ENCODE measurements at regions of chr5 and their contacts with region 1.

Region 1: DNA sequence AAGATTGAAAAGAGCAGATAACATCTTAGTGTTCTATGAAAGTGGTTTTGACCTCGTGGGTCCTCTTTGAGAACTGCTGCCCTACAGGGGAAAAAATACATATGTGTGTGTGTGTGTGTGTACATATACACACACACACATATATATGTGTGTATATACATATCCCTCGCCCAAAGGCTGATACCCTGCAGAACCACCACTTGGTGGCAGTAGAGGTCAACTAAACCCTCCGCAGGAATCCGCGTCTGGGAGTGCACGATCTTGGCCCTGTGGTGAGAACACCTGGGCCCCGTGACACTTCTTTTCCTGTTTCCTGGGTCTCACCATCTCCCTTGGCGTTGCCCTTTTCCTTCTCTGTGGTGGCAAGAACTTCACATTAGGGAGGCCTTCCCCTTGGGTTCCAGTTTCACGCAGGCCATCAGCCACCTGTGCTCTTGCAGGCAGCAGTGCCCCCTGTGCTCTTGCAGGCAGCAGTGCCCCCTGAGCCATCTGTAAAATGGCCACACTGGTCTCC is 8.2 kb downstream of the IL9 start:
- DNase-seq: peak; percentile 25 to 76 (median 58)
- ATAC-seq: peak; percentile 88
- H3K4me3 ChIP-seq: peak overlapping the region in 1 of 2 experiments; percentile 8
- H3K4me3 Mint-ChIP-seq: peak overlapping the region; percentile 35
- H3K27ac ChIP-seq: no peak overlapping the region
- H3K27ac Mint-ChIP-seq: no peak overlapping the region
- H3K4me1 ChIP-seq: no peaks in the 10 kb centered on the region
- H3K4me1 Mint-ChIP-seq: peaks cover 14% of the 10 kb centered on the region
- H3K27me3 ChIP-seq: no peaks in the 10 kb centered on the region
- H3K27me3 Mint-ChIP-seq: peaks cover 17% of the 10 kb centered on the region
- CTCF ChIP-seq: peak; percentile 81

Region 2: GRCh38 chr5:135847976-135848375 is 39.4 kb before region 1 on chr5:
- CTCF ChIA-PET with region 1: no interaction called
- POLR2A ChIA-PET with region 1: no interaction called
- intact Hi-C with region 1: no loop called
- DNase-seq: no peak
- ATAC-seq: no peak
- H3K4me3 ChIP-seq: no peak overlapping the region
- H3K4me3 Mint-ChIP-seq: no peak overlapping the region
- H3K27ac ChIP-seq: no peak overlapping the region
- H3K27ac Mint-ChIP-seq: no peak overlapping the region
- H3K4me1 ChIP-seq: no peaks in the 10 kb centered on the region
- H3K4me1 Mint-ChIP-seq: no peaks in the 10 kb centered on the region
- H3K27me3 ChIP-seq: no peaks in the 10 kb centered on the region
- H3K27me3 Mint-ChIP-seq: no peaks in the 10 kb centered on the region
- CTCF ChIP-seq: no peak

Region 3: GRCh38 chr5:136062366-136063274 is 175.2 kb after region 1 on chr5:
- CTCF ChIA-PET with region 1: no interaction called
- POLR2A ChIA-PET with region 1: no interaction called
- intact Hi-C with region 1: loop called in 1 of 2 experiments (anchors 2 kb)
- DNase-seq: peak in 2 of 9 experiments; percentile 51 to 57
- ATAC-seq: peak; percentile 55
- H3K4me3 ChIP-seq: no peak overlapping the region
- H3K4me3 Mint-ChIP-seq: no peak overlapping the region
- H3K27ac ChIP-seq: no peak overlapping the region
- H3K27ac Mint-ChIP-seq: no peak overlapping the region
- H3K4me1 ChIP-seq: no peaks in the 10 kb centered on the region
- H3K4me1 Mint-ChIP-seq: no peaks in the 10 kb centered on the region
- H3K27me3 ChIP-seq: no peaks in the 10 kb centered on the region
- H3K27me3 Mint-ChIP-seq: peaks cover 7% of the 10 kb centered on the region
- CTCF ChIP-seq: peak; percentile 14

Region 4: DNA sequence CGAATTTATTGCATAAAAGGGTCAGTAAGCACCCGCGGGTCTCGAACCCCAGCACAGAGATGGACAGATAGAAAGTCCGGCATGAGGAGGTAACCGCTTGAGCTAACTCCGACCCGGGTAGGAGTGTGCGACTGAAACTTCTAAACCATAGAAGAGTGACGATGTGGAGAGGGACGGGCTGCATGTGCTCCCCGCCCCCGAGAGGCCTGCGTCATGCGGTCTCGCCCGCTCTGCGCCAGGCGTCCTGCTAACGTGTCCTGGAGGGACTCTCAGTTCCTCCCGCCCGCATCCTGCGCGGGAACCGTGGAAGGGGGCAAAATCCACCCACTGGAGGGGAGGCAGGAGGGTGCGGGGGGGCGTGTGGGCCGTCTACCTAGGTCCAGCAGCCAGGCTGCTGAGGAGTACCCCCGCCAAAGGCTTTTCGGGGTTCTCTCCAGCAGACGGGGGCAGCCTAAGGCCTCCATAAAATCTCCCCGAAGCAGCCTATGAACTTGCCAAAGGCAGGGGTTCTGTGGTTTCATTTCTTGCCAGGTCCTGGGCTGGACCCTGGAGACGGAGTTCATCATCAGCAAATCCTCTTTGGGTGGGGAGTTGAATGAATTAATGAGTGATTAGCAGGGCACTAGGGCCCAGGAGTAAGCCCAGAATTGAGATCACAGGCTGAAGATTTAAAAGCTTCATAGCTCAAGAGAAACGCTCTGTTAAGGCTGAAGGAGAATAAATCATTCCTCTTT is 193.2 kb after region 1 on chr5:
- CTCF ChIA-PET with region 1: interaction called, 8 read pairs
- POLR2A ChIA-PET with region 1: no interaction called
- intact Hi-C with region 1: loop called in 1 of 2 experiments (anchors 1 kb)
- DNase-seq: peak; percentile 10 to 75 (median 44)
- ATAC-seq: peak; percentile 96
- H3K4me3 ChIP-seq: peak overlapping the region; percentile 19 to 39
- H3K4me3 Mint-ChIP-seq: peak overlapping the region; percentile 77
- H3K27ac ChIP-seq: no peak overlapping the region
- H3K27ac Mint-ChIP-seq: peak overlapping the region; percentile 13
- H3K4me1 ChIP-seq: peaks cover 2% of the 10 kb centered on the region
- H3K4me1 Mint-ChIP-seq: peaks cover 4% of the 10 kb centered on the region
- H3K27me3 ChIP-seq: no peaks in the 10 kb centered on the region
- H3K27me3 Mint-ChIP-seq: peaks cover 30% of the 10 kb centered on the region
- CTCF ChIP-seq: no peak

Region 5: GRCh38 chr5:136174021-136174659 is 286.7 kb after region 1 on chr5:
- CTCF ChIA-PET with region 1: no interaction called
- POLR2A ChIA-PET with region 1: no interaction called
- intact Hi-C with region 1: loop called in 1 of 2 experiments (anchors 5 kb)
- DNase-seq: peak in 2 of 9 experiments; percentile 12 to 26
- ATAC-seq: no peak
- H3K4me3 ChIP-seq: no peak overlapping the region
- H3K4me3 Mint-ChIP-seq: no peak overlapping the region
- H3K27ac ChIP-seq: no peak overlapping the region
- H3K27ac Mint-ChIP-seq: no peak overlapping the region
- H3K4me1 ChIP-seq: no peaks in the 10 kb centered on the region
- H3K4me1 Mint-ChIP-seq: no peaks in the 10 kb centered on the region
- H3K27me3 ChIP-seq: no peaks in the 10 kb centered on the region
- H3K27me3 Mint-ChIP-seq: no peaks in the 10 kb centered on the region
- CTCF ChIP-seq: no peak

Region 6: DNA sequence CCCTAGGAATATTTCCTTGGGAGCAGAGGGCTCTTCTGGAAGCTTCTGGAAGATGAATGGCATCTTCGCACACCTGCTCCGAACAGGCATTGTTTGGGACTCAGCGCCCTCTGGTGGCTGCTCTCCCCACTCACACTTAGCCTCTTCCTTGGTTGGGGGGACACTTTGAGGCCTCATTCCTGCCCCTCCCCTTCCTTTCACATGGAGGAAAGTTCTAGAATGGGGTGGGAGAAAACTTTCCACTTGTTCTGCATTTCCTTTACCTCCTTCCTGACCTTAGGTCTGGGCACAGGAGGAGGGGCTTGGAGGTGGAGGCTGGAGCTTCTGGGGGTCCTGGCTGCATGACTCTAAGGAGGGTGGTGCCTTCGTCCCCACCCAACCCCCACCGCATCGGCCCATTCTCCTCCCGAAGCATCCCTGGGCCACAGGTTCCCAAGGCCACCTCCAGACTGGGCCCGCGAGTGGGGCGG is 324.9 kb after region 1 on chr5:
- CTCF ChIA-PET with region 1: interaction called, 9 read pairs
- POLR2A ChIA-PET with region 1: no interaction called
- intact Hi-C with region 1: loop called in 1 of 2 experiments (anchors 1 kb)
- DNase-seq: peak in 8 of 9 experiments; percentile 11 to 65 (median 48)
- ATAC-seq: no peak
- H3K4me3 ChIP-seq: no peak overlapping the region
- H3K4me3 Mint-ChIP-seq: no peak overlapping the region
- H3K27ac ChIP-seq: no peak overlapping the region
- H3K27ac Mint-ChIP-seq: no peak overlapping the region
- H3K4me1 ChIP-seq: no peaks in the 10 kb centered on the region
- H3K4me1 Mint-ChIP-seq: no peaks in the 10 kb centered on the region
- H3K27me3 ChIP-seq: no peaks in the 10 kb centered on the region
- H3K27me3 Mint-ChIP-seq: peaks cover 13% of the 10 kb centered on the region
- CTCF ChIP-seq: peak; percentile 66

Region 7: DNA sequence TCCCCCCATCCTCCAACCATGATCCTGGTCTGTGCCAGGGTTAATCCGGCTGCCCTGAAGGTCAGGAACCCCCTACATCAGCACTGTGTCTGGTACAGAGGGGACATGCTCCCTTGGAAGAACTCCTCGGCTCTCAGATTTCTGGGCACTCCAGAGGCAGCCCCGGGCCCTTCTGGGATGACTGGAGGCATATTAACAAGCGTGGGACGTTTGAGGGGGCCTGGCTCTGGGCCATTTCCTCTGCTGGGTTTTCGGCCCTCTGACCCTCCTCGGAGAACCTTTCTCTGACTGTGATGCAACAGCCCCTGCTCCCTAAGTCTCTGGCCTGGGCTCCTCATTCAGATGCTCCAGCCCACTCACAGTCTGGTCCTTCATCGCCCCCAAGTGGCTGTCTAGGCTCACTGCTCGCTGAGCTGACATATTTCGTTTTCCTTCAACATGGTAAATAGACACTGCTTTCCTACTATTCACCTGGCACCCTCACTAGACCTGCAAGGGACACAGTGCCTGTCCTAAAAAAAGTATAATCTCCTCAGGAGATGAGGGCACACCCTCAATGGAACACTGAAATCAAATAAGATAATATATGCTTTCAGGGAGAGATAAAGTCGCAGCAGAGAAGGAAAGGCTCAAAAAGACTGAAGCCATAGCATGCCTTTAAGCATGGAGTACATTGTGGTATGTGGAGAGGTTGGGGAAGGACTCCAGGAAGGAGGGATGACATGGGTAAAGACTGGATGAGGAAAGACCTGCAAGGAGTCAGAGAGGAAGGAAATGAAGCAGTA is 882.7 kb after region 1 on chr5:
- CTCF ChIA-PET with region 1: no interaction called
- POLR2A ChIA-PET with region 1: no interaction called
- intact Hi-C with region 1: loop called in 1 of 2 experiments (anchors 5 kb)
- DNase-seq: peak in 5 of 9 experiments; percentile 1 to 37 (median 19)
- ATAC-seq: no peak
- H3K4me3 ChIP-seq: no peak overlapping the region
- H3K4me3 Mint-ChIP-seq: no peak overlapping the region
- H3K27ac ChIP-seq: no peak overlapping the region
- H3K27ac Mint-ChIP-seq: no peak overlapping the region
- H3K4me1 ChIP-seq: no peaks in the 10 kb centered on the region
- H3K4me1 Mint-ChIP-seq: no peaks in the 10 kb centered on the region
- H3K27me3 ChIP-seq: no peaks in the 10 kb centered on the region
- H3K27me3 Mint-ChIP-seq: peaks cover 5% of the 10 kb centered on the region
- CTCF ChIP-seq: no peak

Region 8: DNA sequence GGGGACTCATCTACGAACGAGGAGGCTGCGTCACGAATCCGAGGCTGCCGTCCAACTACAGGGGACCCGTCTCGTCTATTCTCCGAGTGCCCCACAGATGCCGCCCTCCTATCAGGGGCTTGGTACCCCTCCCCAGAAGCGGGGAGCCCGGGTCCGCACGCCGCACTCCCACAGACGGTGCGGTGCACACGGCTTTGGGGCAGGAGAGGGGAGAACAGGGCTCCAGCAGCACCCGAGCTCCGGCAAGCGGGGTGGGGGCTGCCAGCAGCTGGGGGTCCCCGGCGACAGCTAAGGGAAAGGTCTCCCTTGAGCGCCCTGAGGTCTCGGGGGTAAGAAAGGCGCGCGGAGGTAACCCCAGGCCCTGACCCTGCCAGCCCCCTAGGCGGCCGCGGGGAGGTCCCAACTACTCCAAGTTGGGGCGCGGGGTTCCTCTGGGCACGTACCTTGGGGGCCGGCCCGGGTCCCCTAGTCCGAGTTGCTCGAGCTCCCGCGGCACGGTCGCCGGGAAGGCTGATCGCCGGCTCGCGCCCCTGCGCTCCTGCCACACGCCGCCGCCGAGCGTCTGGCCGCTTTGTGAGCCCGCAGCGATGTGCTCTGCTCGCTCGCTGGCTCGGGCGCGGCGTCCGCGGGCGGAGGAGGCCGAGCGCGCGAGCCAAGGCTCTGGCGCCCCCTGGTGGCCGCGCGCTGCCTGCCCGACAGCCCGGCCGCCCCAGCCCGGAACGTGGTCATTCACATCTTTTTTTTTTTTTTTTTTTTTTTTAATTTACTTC is 1611.5 kb after region 1 on chr5 and contains the start of gene SPOCK1:
- CTCF ChIA-PET with region 1: no interaction called
- POLR2A ChIA-PET with region 1: no interaction called
- intact Hi-C with region 1: loop called in 1 of 2 experiments (anchors 5 kb)
- DNase-seq: peak in 7 of 9 experiments; percentile 13 to 62 (median 37)
- ATAC-seq: no peak
- H3K4me3 ChIP-seq: no peak within 1 kb of the TSS
- H3K4me3 Mint-ChIP-seq: no peak within 1 kb of the TSS
- H3K27ac ChIP-seq: no peak within 1 kb of the TSS
- H3K27ac Mint-ChIP-seq: no peak within 1 kb of the TSS
- H3K4me1 ChIP-seq: no peaks in the 10 kb centered on the region
- H3K4me1 Mint-ChIP-seq: no peaks in the 10 kb centered on the region
- H3K27me3 ChIP-seq: peaks cover 0 to 3% of the 10 kb centered on the region in 2 experiments
- H3K27me3 Mint-ChIP-seq: peaks cover 27% of the 10 kb centered on the region
- CTCF ChIP-seq: peak; percentile 52
- total RNA-seq, gene SPOCK1: not detected